GM13976 (cell line): ENCODE measurements at regions of chr19 and their contacts with region 1.

Region 1: GRCh38 chr19:33235269-33235995 is 9.8 kb upstream of the SLC7A10 start:
- DNase-seq: peak; percentile 92
- CTCF ChIP-seq: peak; percentile 84

Region 2: GRCh38 chr19:33064792-33065550 is 170.5 kb before region 1 on chr19 and contains the start of gene RHPN2:
- in situ Hi-C with region 1: no loop called
- DNase-seq: peak; percentile 94
- CTCF ChIP-seq: no peak

Region 3: GRCh38 chr19:33406521-33407139 is 171.2 kb after region 1 on chr19:
- in situ Hi-C with region 1: loop called (anchors 10 kb)
- DNase-seq: peak; percentile 92
- CTCF ChIP-seq: peak; percentile 98

Region 4: DNA sequence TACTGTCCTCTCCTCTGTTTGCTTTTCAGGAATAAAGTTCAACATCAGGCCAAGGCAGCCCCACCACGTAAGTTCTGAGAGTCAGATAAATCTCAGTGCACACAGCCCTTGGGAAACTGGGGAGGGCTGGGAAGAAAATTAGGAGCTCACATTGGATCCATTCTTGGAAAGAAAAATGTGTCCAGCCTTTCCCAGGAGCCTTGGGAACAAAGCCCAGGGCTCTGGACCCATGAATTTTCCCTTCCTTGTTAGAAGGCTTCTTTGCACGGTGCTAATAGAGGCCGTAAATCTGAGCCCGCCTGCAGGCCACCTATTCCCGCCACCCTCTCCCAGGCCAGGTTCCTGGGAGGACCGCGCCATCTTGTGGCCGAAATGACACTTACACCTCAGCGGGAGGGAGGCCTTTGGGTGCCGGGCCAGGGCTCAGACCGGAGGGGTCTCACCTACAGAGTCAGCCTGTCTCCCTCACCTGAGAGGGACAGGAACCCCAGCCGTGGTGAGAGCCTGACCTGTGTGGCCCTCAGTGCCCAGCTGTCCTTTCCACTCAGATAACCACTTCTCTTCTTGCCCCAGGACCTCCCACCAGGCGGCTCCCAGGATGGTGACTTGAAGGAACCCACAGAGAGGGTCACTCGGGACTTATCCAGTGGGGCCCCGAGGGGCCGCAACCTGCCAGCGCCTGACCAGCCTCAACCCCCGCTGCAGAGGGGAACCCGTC is 536.1 kb after region 1 on chr19:
- in situ Hi-C with region 1: loop called (anchors 25 kb)
- DNase-seq: peak; percentile 87
- CTCF ChIP-seq: peak; percentile 86